H1 (cell line): ENCODE measurements at regions of chr15 and their contacts with region 1.

Region 1: DNA sequence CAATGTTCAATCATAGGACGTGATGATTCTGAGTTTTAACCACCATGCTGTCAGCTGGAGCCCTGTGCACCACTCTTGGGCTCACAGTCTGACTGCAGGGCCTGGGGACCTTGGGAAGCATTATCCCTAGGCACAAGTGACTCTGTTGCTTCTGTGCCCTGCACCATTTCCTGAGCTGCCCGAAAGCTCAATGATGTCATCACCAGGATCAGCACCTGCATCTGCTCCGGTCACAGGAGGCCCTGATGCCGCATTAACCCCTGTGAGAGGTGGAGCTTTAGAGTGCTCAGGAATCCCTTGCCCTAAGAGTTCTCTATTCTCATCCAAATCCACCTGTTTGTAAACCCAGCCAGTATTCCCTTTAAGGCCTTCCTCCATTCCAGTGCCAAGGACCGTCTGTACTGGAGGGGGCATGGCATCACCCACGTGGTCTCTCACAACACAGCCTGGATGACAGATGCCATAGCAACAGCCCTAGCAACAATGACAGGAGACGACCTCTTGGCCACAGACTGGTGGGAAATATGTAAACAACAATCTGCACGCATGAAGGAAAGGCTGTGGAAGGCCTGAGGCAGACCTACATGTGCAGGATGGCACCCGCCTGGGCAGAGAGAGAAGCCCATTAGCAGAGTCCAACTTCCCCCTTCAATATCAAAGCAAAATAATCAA is 37.9 kb downstream of the NTRK3 start:
- DNase-seq: no peak
- H3K4me3 ChIP-seq: no peak overlapping the region
- H3K27ac ChIP-seq: no peak overlapping the region
- H3K4me1 ChIP-seq: peaks cover 0 to 5% (median under 1%) of the 10 kb centered on the region in 4 experiments; a peak in 2 of 7 replicates
- H3K27me3 ChIP-seq: no peaks in the 10 kb centered on the region
- CTCF ChIP-seq: no peak
- EP300 ChIP-seq: no peak
- POLR2A ChIP-seq: no peak
- RAD21 ChIP-seq: no peak

Region 2: GRCh38 chr15:88208410-88208809 is 10.3 kb before region 1 on chr15:
- CTCF ChIA-PET with region 1: interaction called, 20 read pairs
- POLR2A ChIA-PET with region 1: no interaction called
- DNase-seq: no peak
- H3K4me3 ChIP-seq: no peak overlapping the region
- H3K27ac ChIP-seq: no peak overlapping the region
- H3K4me1 ChIP-seq: peaks cover 0 to 6% (median 4%) of the 10 kb centered on the region in 4 experiments; a peak in 2 of 7 replicates
- H3K27me3 ChIP-seq: no peaks in the 10 kb centered on the region; a peak in 1 of 7 replicates
- CTCF ChIP-seq: no peak
- EP300 ChIP-seq: no peak
- POLR2A ChIP-seq: no peak
- RAD21 ChIP-seq: no peak

Region 3: DNA sequence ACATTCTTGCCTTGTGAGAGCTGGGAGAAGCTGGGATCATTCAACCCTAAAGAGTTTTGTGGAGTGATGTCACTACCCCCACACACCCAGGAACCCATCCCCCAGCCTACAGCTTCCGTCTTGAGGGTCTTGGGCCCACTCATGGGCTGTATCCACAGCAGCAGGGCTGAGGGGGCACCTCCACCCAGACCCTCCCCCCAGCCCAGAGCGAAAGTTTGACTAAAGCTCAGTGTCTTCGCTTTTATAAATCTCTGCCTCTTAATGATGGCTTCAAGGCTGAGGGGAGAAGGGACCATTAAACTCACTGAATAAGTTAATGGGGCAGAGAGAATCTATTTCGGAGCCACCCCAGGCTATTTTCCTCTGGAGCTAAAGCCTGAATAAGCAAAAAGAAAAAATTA is 14.1 kb after region 1 on chr15:
- CTCF ChIA-PET with region 1: interaction called, 12 read pairs
- POLR2A ChIA-PET with region 1: no interaction called
- DNase-seq: no peak
- H3K4me3 ChIP-seq: no peak overlapping the region
- H3K27ac ChIP-seq: no peak overlapping the region
- H3K4me1 ChIP-seq: peaks cover 0 to 4% (median 0%) of the 10 kb centered on the region in 4 experiments; a peak in 3 of 7 replicates
- H3K27me3 ChIP-seq: no peaks in the 10 kb centered on the region
- CTCF ChIP-seq: no peak
- EP300 ChIP-seq: no peak
- POLR2A ChIP-seq: no peak
- RAD21 ChIP-seq: no peak

Region 4: GRCh38 chr15:88241060-88241459 is 22.4 kb after region 1 on chr15:
- CTCF ChIA-PET with region 1: interaction called, 53 read pairs
- POLR2A ChIA-PET with region 1: no interaction called
- DNase-seq: no peak
- H3K4me3 ChIP-seq: no peak overlapping the region
- H3K27ac ChIP-seq: no peak overlapping the region
- H3K4me1 ChIP-seq: peaks cover 0 to 4% (median 0%) of the 10 kb centered on the region in 4 experiments; a peak in 1 of 7 replicates
- H3K27me3 ChIP-seq: no peaks in the 10 kb centered on the region; a peak in 1 of 7 replicates
- CTCF ChIP-seq: peak; percentile 38 to 67 (median 43)
- EP300 ChIP-seq: no peak
- POLR2A ChIP-seq: no peak
- RAD21 ChIP-seq: peak in 1 of 2 experiments; percentile 31; a peak in 2 of 4 replicates